Right ventricle myocardium superior (tissue), 1 donor: ENCODE measurements at regions of chr9 and their contacts with region 1.

Region 1: GRCh38 chr9:131277910-131278701 is 1.8 kb upstream of the FAM78A start:
- DNase-seq: peak; percentile 90
- ATAC-seq: peak; percentile 58

Region 2: GRCh38 chr9:130997925-130998596 is 280.0 kb before region 1 on chr9:
- intact Hi-C with region 1: no loop called
- DNase-seq: peak; percentile 82
- ATAC-seq: peak; percentile 92

Region 3: DNA sequence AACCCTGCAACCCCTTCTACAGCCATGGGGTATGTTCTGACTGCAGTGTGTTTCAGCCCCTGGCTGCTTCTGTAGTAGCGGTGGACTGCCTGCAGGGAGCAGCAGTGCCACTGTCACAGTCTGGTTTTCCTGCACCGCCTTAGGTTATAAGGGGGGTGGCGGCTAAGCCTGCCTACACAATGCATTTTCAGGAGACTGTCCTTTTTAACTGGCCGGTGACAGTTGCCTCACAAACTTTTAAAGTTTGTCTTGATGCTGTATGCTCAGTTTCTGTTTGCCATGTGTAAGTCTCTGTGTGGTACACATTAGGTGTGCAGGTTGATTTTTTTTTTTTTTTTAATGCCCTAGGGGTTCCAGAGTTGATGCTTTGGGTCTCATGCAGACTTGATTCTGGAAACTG is 99.7 kb before region 1 on chr9:
- intact Hi-C with region 1: loop called (anchors 5 kb)
- DNase-seq: peak; percentile 84
- ATAC-seq: peak; percentile 92

Region 4: DNA sequence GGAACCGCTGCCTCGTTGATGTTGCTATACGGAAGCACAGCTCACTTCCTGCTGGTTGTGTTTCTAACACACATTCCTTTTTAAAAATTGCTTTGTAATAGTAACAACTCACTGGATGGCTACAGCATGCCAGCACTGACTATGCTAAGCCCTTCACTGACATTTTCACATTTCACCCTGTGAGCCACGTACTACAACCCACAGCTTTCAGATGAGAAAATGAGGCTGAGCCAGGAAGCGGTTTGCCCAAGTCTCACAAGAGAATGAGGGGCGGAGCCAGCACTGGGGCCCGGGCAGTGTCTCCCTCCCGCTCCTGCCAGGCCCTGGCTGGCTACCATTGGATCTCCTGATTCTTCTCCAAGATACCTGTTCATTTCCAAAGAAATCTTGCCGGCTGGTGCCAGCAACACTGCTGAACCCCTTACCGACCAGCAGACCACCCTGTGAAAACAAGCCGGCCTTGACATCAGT is 40.1 kb before region 1 on chr9:
- intact Hi-C with region 1: loop called (anchors 5 kb)
- DNase-seq: peak; percentile 86
- ATAC-seq: peak; percentile 70

Region 5: DNA sequence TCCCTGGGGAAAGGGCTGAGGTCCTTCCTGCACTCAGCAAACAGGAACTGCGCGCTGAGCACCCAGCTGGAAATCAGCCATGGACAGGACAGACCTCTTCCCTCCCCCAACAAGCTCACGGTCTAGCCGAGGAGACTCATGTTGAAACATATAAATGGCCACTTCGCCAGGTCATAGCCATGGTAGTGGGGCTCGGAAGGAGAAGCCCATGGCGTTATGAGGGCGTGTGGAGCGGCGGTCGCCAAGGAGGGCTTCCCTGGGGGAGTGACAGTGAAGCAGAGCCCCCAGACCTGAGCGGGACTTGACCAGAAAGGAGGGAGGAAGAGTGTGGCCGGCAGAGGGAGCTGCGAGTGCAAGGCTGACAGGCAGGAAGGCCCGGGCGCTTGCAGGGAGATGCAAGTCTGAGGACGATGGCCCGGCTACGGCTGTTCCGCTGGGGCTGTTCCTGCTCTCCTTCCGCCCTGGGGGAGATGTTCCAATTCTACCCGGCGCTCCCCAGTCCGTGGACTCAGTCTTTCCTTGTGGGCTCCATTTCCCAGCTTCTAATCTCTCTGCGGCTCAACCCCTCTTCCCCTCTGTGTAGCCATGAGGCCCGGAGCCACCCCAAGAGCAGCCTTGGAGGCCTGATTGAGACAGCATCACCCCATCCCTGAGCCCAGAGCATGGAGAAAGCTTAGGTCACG is 71.9 kb after region 1 on chr9:
- intact Hi-C with region 1: no loop called
- DNase-seq: peak; percentile 96
- ATAC-seq: peak; percentile 97